Right ventricle myocardium inferior (tissue), 1 donor: ENCODE measurements at regions of chr4 and their contacts with region 1.

Region 1: GRCh38 chr4:53962516-53963225 is 101.7 kb downstream of the CHIC2 start:
- DNase-seq: no peak
- ATAC-seq: no peak

Region 2: GRCh38 chr4:53997901-53998300 is 35.2 kb after region 1 on chr4:
- intact Hi-C with region 1: loop called (anchors 5 kb)
- DNase-seq: no peak
- ATAC-seq: no peak